ENCODE measurements at regions of chr18 and their contacts with region 1.

Region 1: DNA sequence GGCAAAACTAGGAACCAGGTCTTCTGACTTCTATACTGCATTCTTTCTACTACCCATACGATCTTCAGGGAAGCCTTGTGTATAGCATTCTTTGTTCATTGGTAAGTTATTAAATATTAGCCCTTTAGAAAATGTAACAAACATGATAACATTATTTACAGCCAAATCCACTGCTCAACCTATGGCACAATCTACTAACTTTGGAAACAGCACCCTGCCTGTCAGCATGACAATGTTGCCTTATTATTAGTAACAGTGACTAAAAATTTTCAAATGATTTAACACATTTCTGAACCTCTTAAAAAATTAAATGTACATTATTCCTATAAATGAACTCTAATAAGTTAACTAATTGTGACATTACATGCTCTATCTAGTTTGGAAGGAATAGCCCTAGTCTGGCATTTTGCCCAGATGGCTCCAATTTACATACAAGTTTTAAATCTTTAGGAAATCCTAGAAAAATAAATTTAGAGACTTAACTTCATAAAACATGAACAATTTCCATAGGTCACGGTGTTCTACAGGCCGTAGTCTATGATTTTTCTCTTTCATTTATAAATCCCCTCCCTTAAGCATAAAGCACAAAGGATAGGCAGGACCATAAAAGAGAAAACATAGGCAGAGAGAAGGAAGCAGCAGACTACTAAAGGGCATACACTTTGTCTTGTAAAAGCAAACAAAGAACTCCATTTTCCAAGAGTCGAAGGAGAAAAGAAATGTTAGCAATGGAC is 33.7 kb downstream of the YES1 start:
- DNase-seq: no peak
- H3K4me3 ChIP-seq: no peak overlapping the region
- H3K27ac ChIP-seq: no peak overlapping the region
- H3K4me1 ChIP-seq: no peaks in the 10 kb centered on the region
- H3K27me3 ChIP-seq: no peaks in the 10 kb centered on the region
- CTCF ChIP-seq: no peak

Region 2: DNA sequence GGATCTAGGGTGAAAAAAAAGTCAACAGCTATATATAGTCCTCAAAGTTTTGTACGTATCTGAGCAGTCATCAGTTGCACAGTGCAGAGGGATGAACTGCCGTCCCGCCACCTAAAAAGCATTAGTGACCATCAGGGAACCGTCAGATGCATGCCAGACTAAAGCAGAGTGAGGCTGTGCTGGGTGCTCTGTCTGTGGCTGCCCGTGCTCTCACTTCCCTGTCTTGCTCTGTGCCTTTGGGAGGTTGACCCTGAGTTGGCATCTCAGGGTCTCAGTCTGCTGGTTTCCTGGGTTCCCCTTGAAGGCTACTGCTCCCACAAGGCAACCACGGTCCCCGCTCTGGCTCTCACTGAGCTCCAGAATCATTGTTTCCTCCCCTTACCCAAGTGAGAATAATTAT is 170.4 kb before region 1 on chr18:
- CTCF ChIA-PET with region 1: interaction called, 10 read pairs
- dilution Hi-C with region 1: no loop called
- in situ Hi-C with region 1: no loop called
- intact Hi-C with region 1: no loop called
- DNase-seq: no peak
- H3K4me3 ChIP-seq: no peak overlapping the region
- H3K27ac ChIP-seq: no peak overlapping the region
- H3K4me1 ChIP-seq: peaks cover 3% of the 10 kb centered on the region
- H3K27me3 ChIP-seq: no peaks in the 10 kb centered on the region
- CTCF ChIP-seq: no peak

Measured in mammary epithelial cell (primary cell).